PC-3 (cell line): ENCODE measurements at regions of chr20 and their contacts with region 1.

Region 1: GRCh38 chr20:60057123-60057801 is 99.0 kb downstream of the CDH26 start:
- DNase-seq: peak; percentile 75
- ATAC-seq: peak; percentile 82
- H3K4me3 ChIP-seq: no peak overlapping the region
- H3K27ac ChIP-seq: no peak overlapping the region
- H3K4me1 ChIP-seq: no peaks in the 10 kb centered on the region
- H3K27me3 ChIP-seq: peaks cover 28% of the 10 kb centered on the region
- CTCF ChIP-seq: peak; percentile 95

Region 2: GRCh38 chr20:59365611-59366285 is 691.5 kb before region 1 on chr20:
- CTCF ChIA-PET with region 1: no interaction called
- POLR2A ChIA-PET with region 1: no interaction called
- intact Hi-C with region 1: no loop called
- DNase-seq: no peak
- ATAC-seq: no peak
- H3K4me3 ChIP-seq: no peak overlapping the region
- H3K27ac ChIP-seq: no peak overlapping the region
- H3K4me1 ChIP-seq: no peaks in the 10 kb centered on the region
- H3K27me3 ChIP-seq: peaks cover 84% of the 10 kb centered on the region
- CTCF ChIP-seq: no peak

Region 3: GRCh38 chr20:59752101-59752816 is 305.0 kb before region 1 on chr20:
- CTCF ChIA-PET with region 1: no interaction called
- POLR2A ChIA-PET with region 1: no interaction called
- intact Hi-C with region 1: no loop called
- DNase-seq: no peak
- ATAC-seq: no peak
- H3K4me3 ChIP-seq: no peak overlapping the region
- H3K27ac ChIP-seq: no peak overlapping the region
- H3K4me1 ChIP-seq: no peaks in the 10 kb centered on the region
- H3K27me3 ChIP-seq: peaks cover 94% of the 10 kb centered on the region
- CTCF ChIP-seq: no peak

Region 4: GRCh38 chr20:60013296-60014139 is 43.7 kb before region 1 on chr20:
- CTCF ChIA-PET with region 1: interaction called, 11 read pairs
- POLR2A ChIA-PET with region 1: no interaction called
- intact Hi-C with region 1: no loop called
- DNase-seq: no peak
- ATAC-seq: peak; percentile 27; the same call in 1 of the 2 replicates
- H3K4me3 ChIP-seq: no peak overlapping the region
- H3K27ac ChIP-seq: no peak overlapping the region
- H3K4me1 ChIP-seq: 0 out of 2 replicates have a peak, but pooled peaks cover 2% of the 10 kb centered on the region
- H3K27me3 ChIP-seq: no peaks in the 10 kb centered on the region
- CTCF ChIP-seq: no peak

Region 5: DNA sequence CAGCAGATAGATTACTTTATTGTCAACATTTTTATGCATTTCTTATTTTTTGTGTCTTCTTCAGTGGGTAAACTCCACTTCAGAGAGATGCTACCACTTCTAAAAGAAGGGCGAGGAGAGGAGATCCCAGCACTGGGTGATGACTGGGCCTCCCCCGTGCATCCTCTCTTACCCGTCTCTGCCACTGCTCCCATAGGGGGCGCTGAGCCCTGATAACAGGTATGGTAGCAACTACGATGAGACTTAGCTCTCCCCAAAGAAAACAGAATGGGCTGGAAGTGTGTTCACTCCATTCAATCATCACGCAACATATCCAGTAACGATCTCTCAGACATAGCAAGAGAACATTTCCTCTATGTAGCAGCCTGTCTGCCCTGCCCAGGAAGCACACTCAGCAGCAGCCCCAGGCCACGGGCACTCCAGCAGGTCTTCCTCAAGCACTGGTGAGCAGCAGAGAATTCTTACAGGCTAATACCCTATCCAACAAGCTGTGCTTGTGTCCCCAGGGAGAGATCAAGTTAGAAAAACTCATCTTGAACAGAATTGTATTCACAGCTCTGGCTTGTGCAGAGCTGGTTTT is 661.6 kb after region 1 on chr20:
- CTCF ChIA-PET with region 1: no interaction called
- POLR2A ChIA-PET with region 1: interaction called, 10 read pairs
- intact Hi-C with region 1: no loop called
- DNase-seq: no peak
- ATAC-seq: no peak
- H3K4me3 ChIP-seq: no peak overlapping the region
- H3K27ac ChIP-seq: no peak overlapping the region
- H3K4me1 ChIP-seq: no peaks in the 10 kb centered on the region
- H3K27me3 ChIP-seq: no peaks in the 10 kb centered on the region
- CTCF ChIP-seq: no peak

Region 6: GRCh38 chr20:61896058-61896961 is 1839.0 kb after region 1 on chr20:
- CTCF ChIA-PET with region 1: interaction called, 3 read pairs
- POLR2A ChIA-PET with region 1: no interaction called
- intact Hi-C with region 1: loop called (anchors 5 kb)
- DNase-seq: peak; percentile 69
- ATAC-seq: peak; percentile 91
- H3K4me3 ChIP-seq: no peak overlapping the region
- H3K27ac ChIP-seq: no peak overlapping the region
- H3K4me1 ChIP-seq: no peaks in the 10 kb centered on the region
- H3K27me3 ChIP-seq: peaks cover 67% of the 10 kb centered on the region
- CTCF ChIP-seq: peak; percentile 81